SK-N-SH (cell line): ENCODE measurements at regions of chr3 and their contacts with region 1.

Region 1: DNA sequence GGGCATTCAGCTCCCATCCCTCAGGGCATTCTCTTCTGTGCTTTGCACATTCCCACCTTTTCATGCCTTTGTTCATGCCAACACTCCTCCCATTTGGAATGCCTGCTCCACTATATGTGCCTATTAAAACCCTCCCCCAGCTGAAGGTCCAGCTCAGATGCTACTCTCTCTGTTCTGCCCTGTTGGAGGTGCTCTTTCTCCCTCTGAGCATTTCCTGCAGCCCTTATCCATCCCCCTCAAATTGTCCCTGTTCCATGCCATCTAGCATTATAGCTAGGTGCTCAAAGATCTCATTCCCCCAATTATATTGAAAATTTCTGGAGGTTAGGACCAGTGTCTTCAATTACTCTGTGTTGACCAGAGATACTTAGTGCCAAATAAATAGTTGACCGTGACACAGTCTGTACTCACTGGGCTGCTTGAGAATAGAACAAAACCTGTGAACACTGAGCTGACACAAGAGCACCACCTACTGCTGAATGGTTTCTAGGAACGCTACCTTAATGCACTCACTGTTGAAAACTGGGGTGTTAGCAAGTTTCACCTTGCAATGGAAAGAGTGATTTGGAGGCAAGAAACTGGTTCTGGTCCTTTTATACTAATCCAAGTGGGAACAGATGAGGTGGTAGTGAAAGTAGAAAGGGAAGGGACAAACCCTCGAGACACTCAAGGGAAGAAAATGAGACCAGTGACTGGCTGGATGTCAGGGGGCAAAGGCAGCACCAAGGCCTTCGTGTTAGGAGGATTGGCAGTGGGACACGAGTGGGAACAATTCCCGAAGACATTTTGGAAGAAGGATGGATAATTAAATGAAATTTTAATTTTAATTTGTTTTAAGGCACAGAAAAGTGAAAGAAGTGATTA is 289.8 kb upstream of the ROPN1 start:
- DNase-seq: peak; percentile 47
- H3K4me3 ChIP-seq: no peak overlapping the region
- H3K27ac ChIP-seq: peak overlapping the region in 1 of 2 experiments; percentile 100; a peak in 3 of 4 replicates
- H3K4me1 ChIP-seq: peaks cover 5 to 52% of the 10 kb centered on the region in 2 experiments; a peak in 2 of 4 replicates
- H3K27me3 ChIP-seq: no peaks in the 10 kb centered on the region
- CTCF ChIP-seq: peak; percentile 74
- EP300 ChIP-seq: no peak
- RAD21 ChIP-seq: peak; percentile 94

Region 2: DNA sequence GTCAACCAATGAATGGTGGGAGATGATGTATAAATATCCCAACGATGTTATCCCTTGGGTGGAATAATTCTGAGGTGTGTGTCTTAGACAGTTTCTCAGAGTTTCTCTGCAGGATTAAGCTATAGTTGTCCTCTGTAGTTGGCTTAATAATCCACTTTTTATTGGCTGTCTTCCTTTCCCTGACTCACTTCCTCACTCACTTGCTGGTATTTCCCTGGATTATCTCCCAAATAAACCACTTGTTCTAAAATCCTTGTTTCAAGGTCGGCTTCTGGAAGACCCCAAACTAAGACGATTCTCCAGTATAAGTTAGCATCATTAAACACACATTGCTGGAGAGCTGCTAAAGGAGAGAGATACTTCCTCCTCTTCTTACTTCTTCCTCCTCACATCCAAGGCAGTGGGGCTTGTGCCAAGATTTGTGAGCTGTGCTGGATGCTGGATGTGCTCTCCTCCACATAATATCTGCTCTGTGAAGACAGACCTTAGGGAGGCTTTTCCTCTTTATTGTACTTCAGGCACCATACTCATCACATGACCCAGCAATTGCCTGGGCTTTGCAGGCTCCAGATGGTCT is 267.2 kb before region 1 on chr3:
- CTCF ChIA-PET with region 1: interaction called, 32 read pairs
- POLR2A ChIA-PET with region 1: no interaction called
- DNase-seq: no peak
- H3K4me3 ChIP-seq: no peak overlapping the region
- H3K27ac ChIP-seq: no peak overlapping the region
- H3K4me1 ChIP-seq: peaks cover 0 to 5% of the 10 kb centered on the region in 2 experiments; a peak in 1 of 4 replicates
- H3K27me3 ChIP-seq: no peaks in the 10 kb centered on the region
- CTCF ChIP-seq: no peak
- EP300 ChIP-seq: no peak
- RAD21 ChIP-seq: no peak

Region 3: DNA sequence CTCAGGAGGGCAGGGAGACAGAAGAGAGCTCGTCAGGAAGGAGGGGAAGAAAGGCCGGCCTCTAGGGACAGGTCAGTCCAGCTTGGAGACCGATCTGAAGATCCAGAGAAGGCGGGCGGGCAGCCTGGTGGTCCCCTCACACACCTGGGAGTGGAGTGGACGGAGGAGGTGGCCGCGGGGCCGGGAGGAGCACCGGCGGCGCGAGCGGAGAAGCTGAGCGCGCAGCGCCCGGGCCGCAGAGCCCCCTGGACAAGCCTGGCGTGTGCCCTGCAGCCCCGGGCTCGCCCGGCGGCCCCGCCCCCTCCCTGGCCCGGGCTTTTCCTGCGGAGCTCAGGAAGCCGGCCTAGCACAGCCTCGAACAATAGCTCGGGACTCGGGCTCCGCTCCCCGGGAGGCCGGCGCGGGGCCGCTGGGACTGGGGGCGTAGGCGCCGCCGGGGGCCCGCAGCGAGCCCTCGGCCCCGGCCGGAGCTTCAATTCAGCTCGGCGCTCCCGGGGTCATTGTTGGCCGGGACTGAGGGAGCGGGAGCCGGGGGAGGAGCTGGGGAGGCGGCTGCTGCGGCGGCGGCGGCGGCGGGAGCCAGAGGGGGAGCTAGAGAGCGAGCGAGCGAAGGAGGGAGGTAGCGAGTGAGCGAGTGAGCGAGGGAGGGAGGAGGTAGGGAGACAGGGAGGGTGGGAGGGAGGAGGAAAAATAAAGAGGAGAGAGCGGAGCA is 248.9 kb before region 1 on chr3:
- CTCF ChIA-PET with region 1: interaction called, 43 read pairs
- POLR2A ChIA-PET with region 1: interaction called, 5 read pairs
- DNase-seq: peak; percentile 97
- H3K4me3 ChIP-seq: peak overlapping the region; percentile 96 to 97
- H3K27ac ChIP-seq: peak overlapping the region; percentile 65 to 92
- H3K4me1 ChIP-seq: peaks cover 0 to 22% of the 10 kb centered on the region in 2 experiments; a peak in 3 of 4 replicates
- H3K27me3 ChIP-seq: no peaks in the 10 kb centered on the region
- CTCF ChIP-seq: peak; percentile 56
- EP300 ChIP-seq: peak; percentile 4 to 83; a peak in 1 of 4 replicates
- RAD21 ChIP-seq: peak; percentile 49

Region 4: GRCh38 chr3:124063197-124063909 is 218.3 kb before region 1 on chr3:
- CTCF ChIA-PET with region 1: interaction called, 11 read pairs
- POLR2A ChIA-PET with region 1: no interaction called
- DNase-seq: peak; percentile 30
- H3K4me3 ChIP-seq: no peak overlapping the region
- H3K27ac ChIP-seq: peak overlapping the region in 1 of 2 experiments; percentile 96; a peak in 2 of 4 replicates
- H3K4me1 ChIP-seq: peaks cover 8 to 65% of the 10 kb centered on the region in 2 experiments; a peak in 3 of 4 replicates
- H3K27me3 ChIP-seq: no peaks in the 10 kb centered on the region
- CTCF ChIP-seq: no peak
- EP300 ChIP-seq: no peak
- RAD21 ChIP-seq: no peak

Region 5: GRCh38 chr3:124078953-124079911 is 202.5 kb before region 1 on chr3:
- CTCF ChIA-PET with region 1: interaction called, 26 read pairs
- POLR2A ChIA-PET with region 1: no interaction called
- DNase-seq: peak; percentile 45
- H3K4me3 ChIP-seq: no peak overlapping the region
- H3K27ac ChIP-seq: peak overlapping the region in 1 of 2 experiments; percentile 34; a peak in 1 of 4 replicates
- H3K4me1 ChIP-seq: peaks cover 0 to 34% of the 10 kb centered on the region in 2 experiments; a peak in 3 of 4 replicates
- H3K27me3 ChIP-seq: no peaks in the 10 kb centered on the region
- CTCF ChIP-seq: peak; percentile 89
- EP300 ChIP-seq: no peak
- RAD21 ChIP-seq: peak; percentile 85

Region 6: DNA sequence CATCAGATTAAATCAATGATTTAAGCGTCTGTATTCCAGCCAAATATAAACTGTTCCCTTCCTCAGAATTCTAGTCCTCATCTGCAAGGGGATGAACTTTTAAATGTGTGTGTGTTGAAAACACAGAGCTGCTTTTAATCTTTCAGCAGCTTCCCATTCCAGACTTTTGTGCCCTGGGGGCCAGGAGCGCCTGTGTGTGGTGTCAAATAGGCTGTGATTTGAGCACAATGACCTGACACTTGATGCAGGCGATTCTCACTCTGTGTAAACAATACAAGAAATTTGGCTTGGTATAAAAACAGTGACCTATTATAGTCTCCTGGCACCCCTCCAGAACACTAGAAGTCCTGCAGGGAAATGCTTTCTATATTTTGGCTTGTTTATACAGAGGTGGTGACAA is 15.2 kb before region 1 on chr3:
- CTCF ChIA-PET with region 1: interaction called, 49 read pairs
- POLR2A ChIA-PET with region 1: no interaction called
- DNase-seq: peak; percentile 69
- H3K4me3 ChIP-seq: no peak overlapping the region
- H3K27ac ChIP-seq: peak overlapping the region in 1 of 2 experiments; percentile 93; a peak in 2 of 4 replicates
- H3K4me1 ChIP-seq: peaks cover 17 to 38% of the 10 kb centered on the region in 2 experiments
- H3K27me3 ChIP-seq: no peaks in the 10 kb centered on the region
- CTCF ChIP-seq: no peak
- EP300 ChIP-seq: peak in 1 of 2 experiments; percentile 88; a peak in 2 of 4 replicates
- RAD21 ChIP-seq: peak; percentile 33

Region 7: GRCh38 chr3:124297062-124297980 is 15.6 kb after region 1 on chr3:
- CTCF ChIA-PET with region 1: interaction called, 17 read pairs
- POLR2A ChIA-PET with region 1: no interaction called
- DNase-seq: peak; percentile 35
- H3K4me3 ChIP-seq: no peak overlapping the region
- H3K27ac ChIP-seq: peak overlapping the region; percentile 17 to 98; a peak in 3 of 4 replicates
- H3K4me1 ChIP-seq: peaks cover 15 to 62% of the 10 kb centered on the region in 2 experiments
- H3K27me3 ChIP-seq: no peaks in the 10 kb centered on the region
- CTCF ChIP-seq: no peak
- EP300 ChIP-seq: peak in 1 of 2 experiments; percentile 55; a peak in 2 of 4 replicates
- RAD21 ChIP-seq: no peak